SK-N-SH (cell line): ENCODE measurements at regions of chr1 and their contacts with region 1.

Region 1: GRCh38 chr1:201221201-201221846 is 30.7 kb downstream of the IGFN1 start:
- DNase-seq: peak; percentile 29
- H3K4me3 ChIP-seq: no peak overlapping the region
- H3K27ac ChIP-seq: no peak overlapping the region
- H3K4me1 ChIP-seq: peaks cover 0 to 3% of the 10 kb centered on the region in 2 experiments; a peak in 1 of 4 replicates
- H3K27me3 ChIP-seq: no peaks in the 10 kb centered on the region
- CTCF ChIP-seq: no peak
- EP300 ChIP-seq: no peak
- RAD21 ChIP-seq: no peak

Region 2: DNA sequence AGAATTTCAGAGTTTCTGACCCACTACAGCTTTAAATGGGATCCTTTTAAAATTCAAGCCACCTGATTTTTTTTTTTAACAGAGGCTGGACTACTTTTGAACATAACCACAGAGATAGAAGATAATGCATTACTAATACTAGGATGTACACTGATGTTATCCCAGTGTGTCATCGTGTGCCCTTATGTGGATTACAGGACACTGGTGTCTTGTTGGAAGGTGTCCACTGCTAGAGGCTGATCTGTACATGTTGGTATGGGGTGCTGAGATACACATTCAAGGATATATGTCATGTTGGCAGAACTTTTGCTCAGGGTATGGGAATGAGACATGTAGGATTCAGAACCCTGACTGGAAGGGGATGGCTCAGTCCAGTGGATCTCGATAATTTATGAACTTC is 270.3 kb before region 1 on chr1:
- CTCF ChIA-PET with region 1: no interaction called
- POLR2A ChIA-PET with region 1: no interaction called
- DNase-seq: no peak
- H3K4me3 ChIP-seq: no peak overlapping the region
- H3K27ac ChIP-seq: no peak overlapping the region
- H3K4me1 ChIP-seq: no peaks in the 10 kb centered on the region
- H3K27me3 ChIP-seq: peaks cover 5% of the 10 kb centered on the region; the same call in 1 of the 2 replicates
- CTCF ChIP-seq: no peak
- EP300 ChIP-seq: no peak
- RAD21 ChIP-seq: no peak

Region 3: GRCh38 chr1:201144001-201144635 is 77.2 kb before region 1 on chr1:
- CTCF ChIA-PET with region 1: interaction called, 11 read pairs
- POLR2A ChIA-PET with region 1: no interaction called
- DNase-seq: no peak
- H3K4me3 ChIP-seq: no peak overlapping the region
- H3K27ac ChIP-seq: no peak overlapping the region
- H3K4me1 ChIP-seq: peaks cover 0 to 32% of the 10 kb centered on the region in 2 experiments; a peak in 1 of 4 replicates
- H3K27me3 ChIP-seq: no peaks in the 10 kb centered on the region
- CTCF ChIP-seq: no peak
- EP300 ChIP-seq: no peak
- RAD21 ChIP-seq: no peak

Region 4: GRCh38 chr1:201170533-201171062 is 50.7 kb before region 1 on chr1:
- CTCF ChIA-PET with region 1: interaction called, 11 read pairs
- POLR2A ChIA-PET with region 1: no interaction called
- DNase-seq: peak; percentile 97
- H3K4me3 ChIP-seq: peak overlapping the region; percentile 70 to 79
- H3K27ac ChIP-seq: peak overlapping the region in 1 of 2 experiments; percentile 76; a peak in 2 of 4 replicates
- H3K4me1 ChIP-seq: peaks cover 0 to 10% of the 10 kb centered on the region in 2 experiments; a peak in 2 of 4 replicates
- H3K27me3 ChIP-seq: 0 out of 2 replicates have a peak, but pooled peaks cover 7% of the 10 kb centered on the region
- CTCF ChIP-seq: no peak
- EP300 ChIP-seq: no peak
- RAD21 ChIP-seq: no peak

Region 5: DNA sequence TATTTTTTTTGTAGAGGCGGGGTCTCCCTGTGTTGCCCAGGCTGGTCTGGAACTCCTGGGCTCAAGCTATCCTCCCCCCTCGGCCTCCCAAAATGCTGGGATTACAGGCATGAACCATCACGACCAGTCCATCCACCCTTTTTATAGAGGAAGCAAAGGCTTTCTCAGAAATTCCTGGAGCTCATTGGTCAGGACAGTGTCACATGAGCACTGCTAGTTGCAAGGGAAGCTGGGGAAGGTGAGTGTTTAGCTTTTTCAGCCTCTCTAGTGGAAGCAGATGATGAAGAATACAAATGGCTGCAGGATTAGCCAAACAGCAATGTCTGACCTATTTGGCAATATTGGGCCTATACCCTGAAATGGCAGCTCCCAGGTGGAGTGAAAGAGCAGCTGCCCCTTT is 22.7 kb before region 1 on chr1:
- CTCF ChIA-PET with region 1: interaction called, 15 read pairs
- POLR2A ChIA-PET with region 1: no interaction called
- DNase-seq: no peak
- H3K4me3 ChIP-seq: no peak overlapping the region
- H3K27ac ChIP-seq: no peak overlapping the region
- H3K4me1 ChIP-seq: no peaks in the 10 kb centered on the region
- H3K27me3 ChIP-seq: peaks cover 3% of the 10 kb centered on the region; the same call in 1 of the 2 replicates
- CTCF ChIP-seq: no peak
- EP300 ChIP-seq: no peak
- RAD21 ChIP-seq: no peak